ENCODE measurements at regions of chr5 and their contacts with region 1.

Region 1: DNA sequence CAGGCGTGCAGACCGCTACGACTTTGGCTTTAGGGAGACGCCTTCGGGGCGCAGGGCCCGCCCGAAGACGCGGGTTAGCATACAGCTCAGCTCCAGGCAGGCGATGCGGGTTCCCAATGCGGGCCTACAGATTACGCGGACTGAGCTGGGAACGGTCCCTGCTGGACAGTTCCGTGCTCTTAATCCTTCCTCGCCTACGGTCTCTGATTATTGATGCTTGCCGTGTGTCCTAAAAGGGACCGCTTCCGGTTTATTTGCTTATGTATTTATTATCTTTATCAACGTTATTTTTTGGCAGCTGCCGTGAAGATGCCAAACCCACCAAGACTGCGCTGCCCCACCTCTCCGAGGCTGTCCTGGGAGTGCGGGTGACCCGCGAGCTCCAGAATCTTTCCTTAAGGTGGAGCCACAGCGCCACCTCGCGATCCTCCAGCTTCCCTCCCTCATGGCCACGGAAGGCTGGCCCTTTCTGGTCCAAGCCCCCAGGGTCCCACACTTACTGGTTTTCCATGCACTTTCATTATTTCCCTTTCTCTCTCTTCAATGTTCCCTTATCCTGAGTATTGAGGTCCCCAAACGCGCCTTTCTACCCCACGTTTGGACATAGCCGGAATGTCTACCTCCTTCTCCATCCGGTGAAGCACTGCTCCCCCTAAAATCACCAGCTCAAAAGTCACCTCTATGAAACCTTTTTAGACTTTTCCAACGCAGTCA is 7.0 kb upstream of the EBF1 start:
- DNase-seq: peak; percentile 73 to 90
- ATAC-seq: peak; percentile 89 to 94
- H3K4me3 ChIP-seq: peak overlapping the region; percentile 29
- H3K27ac ChIP-seq: peak overlapping the region in 1 of 2 experiments; percentile 46; a peak in 3 of 6 replicates
- H3K4me1 ChIP-seq: no peaks in the 10 kb centered on the region; the same call in 1 of the 3 replicates
- CTCF ChIP-seq: peak; percentile 97
- EP300 ChIP-seq: no peak
- POLR2A ChIP-seq: no peak
- RAD21 ChIP-seq: peak; percentile 97 to 99

Region 2: GRCh38 chr5:157761690-157762621 is 1344.8 kb before region 1 on chr5:
- CTCF ChIA-PET with region 1: interaction called, 29 read pairs
- POLR2A ChIA-PET with region 1: no interaction called
- DNase-seq: peak; percentile 67 to 72
- ATAC-seq: peak; percentile 94 to 98
- H3K4me3 ChIP-seq: no peak overlapping the region
- H3K27ac ChIP-seq: no peak overlapping the region
- H3K4me1 ChIP-seq: no peaks in the 10 kb centered on the region
- CTCF ChIP-seq: peak; percentile 88
- EP300 ChIP-seq: no peak
- POLR2A ChIP-seq: no peak
- RAD21 ChIP-seq: peak; percentile 77 to 82

Region 3: DNA sequence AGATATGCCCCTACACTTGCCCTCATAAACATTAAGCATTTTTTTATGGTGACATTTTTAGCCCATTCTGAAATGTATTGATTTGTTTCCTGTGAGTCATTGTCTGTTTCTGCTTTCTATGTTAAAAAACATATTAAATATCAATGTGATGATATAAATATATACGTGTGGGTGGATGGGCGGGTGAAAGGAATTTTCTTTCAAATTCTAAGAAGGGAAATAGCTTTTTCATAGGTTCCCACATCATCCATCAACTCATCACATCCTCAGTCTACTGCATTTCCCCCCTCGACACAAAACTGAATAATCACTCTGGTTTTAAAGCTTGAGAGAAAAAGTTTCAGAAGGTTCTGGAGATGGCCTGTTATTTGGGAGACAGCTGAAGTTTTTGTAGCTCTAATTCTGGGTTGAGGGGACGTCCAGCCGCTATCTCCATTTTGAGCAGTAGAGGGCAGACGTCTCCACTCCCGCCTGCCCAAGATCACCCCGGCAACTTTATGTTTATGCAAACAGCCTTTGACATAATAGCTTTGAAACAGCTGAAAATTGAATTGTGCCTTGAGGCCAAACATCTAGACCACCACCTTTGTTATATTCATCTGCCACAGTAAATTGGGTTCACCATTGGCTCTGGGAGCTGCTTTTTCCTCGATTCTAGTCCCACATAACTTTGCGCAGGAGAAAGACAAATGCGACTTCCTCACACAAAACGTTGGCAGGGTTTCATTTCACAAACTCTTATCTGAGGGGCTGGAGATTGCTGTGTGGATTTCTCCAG is 1031.5 kb before region 1 on chr5:
- CTCF ChIA-PET with region 1: interaction called, 28 read pairs
- POLR2A ChIA-PET with region 1: no interaction called
- DNase-seq: peak; percentile 59 to 70
- ATAC-seq: peak; percentile 88 to 95
- H3K4me3 ChIP-seq: no peak overlapping the region
- H3K27ac ChIP-seq: no peak overlapping the region
- H3K4me1 ChIP-seq: no peaks in the 10 kb centered on the region
- CTCF ChIP-seq: peak; percentile 69
- EP300 ChIP-seq: no peak
- POLR2A ChIP-seq: no peak
- RAD21 ChIP-seq: peak; percentile 65 to 68

Region 4: DNA sequence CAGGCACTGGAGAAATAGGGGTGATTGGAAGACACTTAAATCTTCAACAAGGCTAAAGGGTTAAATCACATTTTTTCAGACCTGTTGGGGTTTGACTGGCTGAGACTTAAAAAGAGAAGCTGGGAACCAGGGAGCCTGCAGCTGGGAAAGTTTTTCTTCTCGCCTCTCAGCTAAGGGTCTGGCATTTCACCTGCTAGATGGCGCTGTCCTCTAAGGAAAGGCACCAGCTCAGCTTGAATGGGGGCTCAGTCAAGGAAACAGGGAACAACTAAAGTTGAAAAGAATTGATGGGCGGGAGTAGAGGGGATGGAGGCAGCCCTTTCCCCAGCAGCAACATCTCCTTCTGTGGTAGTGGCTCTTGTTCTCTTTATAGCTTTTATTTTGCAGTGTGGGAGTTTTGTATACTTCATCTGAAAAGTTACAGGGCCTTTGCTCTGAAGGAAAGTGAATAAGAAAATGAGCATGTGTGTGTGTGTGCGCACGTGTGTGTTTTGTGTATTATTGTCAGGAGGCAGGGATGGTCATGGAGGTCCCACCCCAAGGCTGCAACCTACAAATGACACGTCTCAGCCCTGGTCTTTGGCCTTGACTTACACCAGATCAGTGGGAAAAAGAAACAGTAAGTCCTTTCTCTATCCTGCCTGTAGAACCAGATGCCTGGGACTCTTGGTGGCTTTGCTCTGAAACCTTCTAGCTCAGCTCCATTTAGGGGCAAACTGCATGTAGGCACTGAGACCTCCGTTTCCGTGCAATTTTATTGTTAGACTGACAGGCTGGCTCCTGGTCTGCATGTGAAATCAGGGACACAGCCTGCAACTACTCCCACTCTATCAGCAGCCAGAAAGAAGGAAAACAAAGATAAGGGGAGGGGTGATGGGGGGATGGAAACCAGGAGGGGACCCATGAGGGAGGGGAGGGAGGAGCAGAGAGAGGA is 931.5 kb before region 1 on chr5:
- CTCF ChIA-PET with region 1: interaction called, 49 read pairs
- POLR2A ChIA-PET with region 1: no interaction called
- DNase-seq: peak; percentile 59 to 63
- ATAC-seq: peak; percentile 76 to 95
- H3K4me3 ChIP-seq: no peak overlapping the region
- H3K27ac ChIP-seq: no peak overlapping the region
- H3K4me1 ChIP-seq: no peaks in the 10 kb centered on the region
- CTCF ChIP-seq: peak; percentile 67
- EP300 ChIP-seq: no peak
- POLR2A ChIP-seq: no peak
- RAD21 ChIP-seq: peak; percentile 82 to 92

Region 5: DNA sequence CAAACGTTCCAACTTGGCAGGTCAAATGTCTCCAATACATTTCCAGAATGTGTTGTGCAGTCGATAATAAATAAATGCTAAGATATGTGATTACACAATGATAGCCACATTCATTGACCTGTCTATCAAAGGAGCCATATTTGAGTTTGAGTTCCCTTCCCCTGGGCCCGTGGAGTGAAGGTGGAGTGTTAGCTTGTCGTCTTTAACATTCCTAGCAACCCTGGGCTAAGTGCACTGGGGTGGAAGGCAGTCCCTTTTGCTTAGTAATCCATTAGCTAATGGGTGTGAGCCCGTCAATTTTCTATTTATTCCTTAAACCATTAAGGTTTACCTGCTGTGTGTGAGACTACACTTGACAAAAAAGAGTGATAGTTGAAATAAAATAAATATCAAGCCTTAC is 422.3 kb before region 1 on chr5:
- CTCF ChIA-PET with region 1: interaction called, 461 read pairs
- POLR2A ChIA-PET with region 1: no interaction called
- DNase-seq: no peak
- ATAC-seq: no peak
- H3K4me3 ChIP-seq: no peak overlapping the region
- H3K27ac ChIP-seq: no peak overlapping the region
- H3K4me1 ChIP-seq: no peaks in the 10 kb centered on the region
- CTCF ChIP-seq: no peak
- EP300 ChIP-seq: no peak
- POLR2A ChIP-seq: no peak
- RAD21 ChIP-seq: no peak

Region 6: DNA sequence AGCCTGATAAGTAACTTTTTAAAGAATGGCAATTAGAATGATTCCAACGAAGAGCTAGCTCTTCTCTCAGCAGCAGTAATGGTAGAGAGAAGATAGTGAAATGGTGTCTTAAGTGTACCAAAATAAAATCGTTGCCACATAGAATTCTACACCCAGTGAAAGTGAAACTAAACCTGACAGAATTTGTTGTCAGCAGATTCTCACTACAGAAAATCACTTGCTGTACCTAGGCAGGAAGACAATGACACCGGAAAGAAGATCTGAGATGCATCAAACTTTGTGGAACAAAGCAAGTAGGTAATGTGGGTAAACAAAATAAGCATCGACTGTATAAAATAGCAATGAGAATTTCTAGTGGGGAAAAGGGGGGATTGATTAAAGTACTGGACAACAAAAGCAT is 13.7 kb after region 1 on chr5:
- CTCF ChIA-PET with region 1: interaction called, 13 read pairs
- POLR2A ChIA-PET with region 1: no interaction called
- DNase-seq: no peak
- ATAC-seq: peak; percentile 19 to 40; a peak in 3 of 6 replicates
- H3K4me3 ChIP-seq: peak overlapping the region; percentile 17; the same call in 1 of the 3 replicates
- H3K27ac ChIP-seq: peak overlapping the region in 1 of 2 experiments; percentile 18; a peak in 1 of 6 replicates
- H3K4me1 ChIP-seq: no peaks in the 10 kb centered on the region
- CTCF ChIP-seq: no peak
- EP300 ChIP-seq: no peak
- POLR2A ChIP-seq: no peak
- RAD21 ChIP-seq: no peak

Region 7: GRCh38 chr5:159133041-159133741 is 26.5 kb after region 1 on chr5:
- CTCF ChIA-PET with region 1: interaction called, 20 read pairs
- POLR2A ChIA-PET with region 1: no interaction called
- DNase-seq: peak; percentile 25 to 65
- ATAC-seq: peak; percentile 61 to 78
- H3K4me3 ChIP-seq: no peak overlapping the region
- H3K27ac ChIP-seq: peak overlapping the region; percentile 4 to 29; a peak in 1 of 6 replicates
- H3K4me1 ChIP-seq: peaks cover 25% of the 10 kb centered on the region
- CTCF ChIP-seq: peak; percentile 93
- EP300 ChIP-seq: no peak
- POLR2A ChIP-seq: no peak
- RAD21 ChIP-seq: peak; percentile 92 to 93

Region 8: DNA sequence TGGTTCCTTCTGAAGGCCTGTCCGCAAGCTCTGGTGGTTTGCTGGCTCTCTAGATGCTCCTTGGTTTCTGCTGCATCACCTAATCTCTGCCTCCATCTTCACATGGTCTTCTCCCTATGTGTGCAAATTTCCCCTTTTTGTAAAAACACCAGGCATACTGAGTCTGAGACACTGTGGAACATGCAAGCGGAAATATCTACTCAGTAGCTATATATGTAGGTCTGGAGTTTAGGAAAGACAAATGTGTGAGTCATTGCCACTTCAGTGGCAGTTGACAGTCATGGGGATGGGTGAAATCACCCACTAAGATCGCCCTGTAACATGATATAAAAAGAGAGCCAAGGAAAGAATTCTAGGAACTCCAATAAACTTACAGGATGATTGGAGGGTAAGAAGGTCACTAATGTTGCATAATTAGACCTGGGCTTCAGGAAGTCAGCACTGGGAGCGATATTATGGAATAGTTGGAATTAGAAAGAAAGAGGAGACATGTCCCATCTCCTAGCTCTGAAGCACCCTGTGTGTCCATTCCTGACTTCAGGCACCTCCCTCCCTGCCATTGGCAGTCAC is 133.7 kb after region 1 on chr5:
- CTCF ChIA-PET with region 1: no interaction called
- POLR2A ChIA-PET with region 1: no interaction called
- DNase-seq: peak; percentile 65 to 79
- ATAC-seq: peak; percentile 96 to 97
- H3K4me3 ChIP-seq: no peak overlapping the region
- H3K27ac ChIP-seq: peak overlapping the region; percentile 67 to 77
- H3K4me1 ChIP-seq: peaks cover 24% of the 10 kb centered on the region
- CTCF ChIP-seq: no peak
- EP300 ChIP-seq: peak; percentile 72 to 77; a peak in 3 of 5 replicates
- POLR2A ChIP-seq: no peak
- RAD21 ChIP-seq: 0 out of 5 replicates have a peak, but pooled peaks of 1 of the 2 experiments have one; percentile 24

Measured in A549 (cell line).